Ascending aorta (tissue), 2 donors: ENCODE measurements at regions of chr9 and their contacts with region 1.

Region 1: DNA sequence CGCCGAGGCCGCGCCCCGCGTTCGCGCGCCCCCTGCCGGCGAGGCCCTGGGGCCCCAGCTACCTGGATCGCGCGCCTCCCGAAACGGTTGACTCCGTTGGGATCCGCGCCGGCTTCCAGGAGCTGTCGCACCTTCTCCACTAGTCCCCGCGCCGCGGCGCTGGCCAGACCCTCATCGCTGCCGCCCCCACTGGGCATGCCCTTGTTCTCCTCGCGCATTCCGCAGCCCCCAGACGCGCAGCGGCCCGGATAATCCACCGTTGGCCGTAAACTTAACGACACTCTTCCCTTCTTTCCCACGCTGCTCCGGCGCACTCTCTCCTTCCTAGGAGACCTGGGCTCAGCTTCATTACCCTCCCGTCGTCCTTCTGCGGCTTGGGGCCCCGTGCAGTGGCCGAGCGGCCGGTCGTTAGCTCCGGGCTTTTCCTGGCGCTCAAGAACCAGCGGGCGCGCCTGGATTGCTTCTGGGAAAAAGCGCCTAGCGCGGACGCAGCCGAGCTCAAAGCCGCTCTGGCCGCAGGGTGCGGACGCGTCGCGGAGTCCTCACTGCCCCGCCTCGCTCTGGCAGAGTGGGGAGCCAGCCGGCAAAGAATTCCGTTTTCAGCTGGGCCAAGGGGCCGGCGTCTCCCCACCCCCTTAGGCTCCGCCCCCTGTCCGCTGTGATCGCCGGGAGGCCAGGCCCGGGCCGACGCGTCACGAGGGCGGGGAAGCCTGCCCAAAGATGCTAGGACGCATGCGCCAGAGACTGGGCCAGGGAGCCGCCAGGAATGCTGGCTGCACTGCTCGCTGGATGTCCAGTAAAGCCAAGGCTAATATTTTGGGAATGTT is at the start of gene CDKN2B:
- DNase-seq: peak; percentile 78 to 97
- H3K4me3 ChIP-seq: peak within 1 kb of the TSS; percentile 76 to 78
- H3K27ac ChIP-seq: peak within 1 kb of the TSS; percentile 87 to 93
- H3K4me1 ChIP-seq: peaks cover 0 to 9% of the 10 kb centered on the region in 2 donors
- H3K27me3 ChIP-seq: no peaks in the 10 kb centered on the region
- CTCF ChIP-seq: peak; percentile 73 to 95 (median 93)
- total RNA-seq, gene CDKN2B: 11.4 TPM

Region 2: DNA sequence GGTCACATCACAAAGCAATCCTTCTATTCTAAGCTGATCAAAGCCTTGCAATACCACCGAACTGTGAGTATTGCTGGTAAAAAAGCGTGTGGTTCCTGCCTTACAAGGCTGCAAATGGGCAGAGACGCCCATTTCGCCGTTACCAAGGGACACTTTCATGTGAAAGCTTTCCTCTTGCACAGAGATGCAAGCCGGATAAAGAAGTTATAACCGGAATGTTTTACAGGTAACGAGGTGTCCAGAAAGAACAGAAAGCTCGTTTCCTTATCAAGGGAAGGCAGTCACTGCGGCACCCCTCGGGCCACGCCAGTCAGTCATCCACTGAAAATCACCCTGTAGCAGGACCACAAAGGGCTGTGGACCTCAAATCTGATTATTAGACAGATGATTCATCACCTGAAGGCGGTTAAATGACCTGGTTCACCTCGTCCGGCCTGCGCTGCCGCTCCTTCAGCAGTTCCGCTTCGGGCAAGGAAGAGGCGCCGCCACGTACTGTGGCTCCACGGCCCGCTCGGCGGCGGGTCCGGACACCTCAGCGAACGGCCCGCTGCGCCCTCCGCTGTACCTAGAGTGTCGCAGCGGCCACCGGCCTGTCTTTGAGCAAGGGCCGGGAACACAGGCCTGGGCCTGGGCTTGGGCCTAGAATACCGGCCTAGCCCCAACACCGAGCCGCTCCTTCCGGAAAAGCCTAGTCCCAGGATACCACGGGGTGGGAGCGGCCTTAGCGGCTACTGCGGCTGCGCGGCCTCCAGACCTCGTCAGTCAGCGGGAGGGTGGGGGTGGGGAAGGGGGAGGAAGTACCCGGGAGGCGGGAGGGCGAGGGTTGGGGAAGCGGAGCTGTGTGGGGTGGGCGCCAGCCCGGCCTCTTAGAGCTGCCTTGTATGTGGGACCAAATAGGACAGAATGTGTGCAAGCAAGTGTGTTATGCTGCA is 674.0 kb before region 1 on chr9 and contains the start of gene KLHL9:
- intact Hi-C with region 1: loop called (anchors 10 kb)
- DNase-seq: peak; percentile 54 to 95
- H3K4me3 ChIP-seq: peak within 1 kb of the TSS; percentile 73 to 99
- H3K27ac ChIP-seq: peak within 1 kb of the TSS; percentile 86 to 97
- H3K4me1 ChIP-seq: peaks cover 9 to 27% of the 10 kb centered on the region in 2 donors
- H3K27me3 ChIP-seq: no peaks in the 10 kb centered on the region
- CTCF ChIP-seq: no peak
- total RNA-seq, gene KLHL9: 6.4 TPM

Region 3: GRCh38 chr9:21802195-21803000 is 206.6 kb before region 1 on chr9 and contains the start of gene MTAP:
- intact Hi-C with region 1: loop called (anchors 2 kb)
- DNase-seq: peak; percentile 70 to 94
- H3K4me3 ChIP-seq: peak within 1 kb of the TSS; percentile 91 to 99
- H3K27ac ChIP-seq: peak within 1 kb of the TSS; percentile 87 to 91
- H3K4me1 ChIP-seq: peaks cover 0 to 10% of the 10 kb centered on the region in 2 donors
- H3K27me3 ChIP-seq: no peaks in the 10 kb centered on the region
- CTCF ChIP-seq: no peak
- total RNA-seq, gene MTAP: 34.7 TPM

Region 4: DNA sequence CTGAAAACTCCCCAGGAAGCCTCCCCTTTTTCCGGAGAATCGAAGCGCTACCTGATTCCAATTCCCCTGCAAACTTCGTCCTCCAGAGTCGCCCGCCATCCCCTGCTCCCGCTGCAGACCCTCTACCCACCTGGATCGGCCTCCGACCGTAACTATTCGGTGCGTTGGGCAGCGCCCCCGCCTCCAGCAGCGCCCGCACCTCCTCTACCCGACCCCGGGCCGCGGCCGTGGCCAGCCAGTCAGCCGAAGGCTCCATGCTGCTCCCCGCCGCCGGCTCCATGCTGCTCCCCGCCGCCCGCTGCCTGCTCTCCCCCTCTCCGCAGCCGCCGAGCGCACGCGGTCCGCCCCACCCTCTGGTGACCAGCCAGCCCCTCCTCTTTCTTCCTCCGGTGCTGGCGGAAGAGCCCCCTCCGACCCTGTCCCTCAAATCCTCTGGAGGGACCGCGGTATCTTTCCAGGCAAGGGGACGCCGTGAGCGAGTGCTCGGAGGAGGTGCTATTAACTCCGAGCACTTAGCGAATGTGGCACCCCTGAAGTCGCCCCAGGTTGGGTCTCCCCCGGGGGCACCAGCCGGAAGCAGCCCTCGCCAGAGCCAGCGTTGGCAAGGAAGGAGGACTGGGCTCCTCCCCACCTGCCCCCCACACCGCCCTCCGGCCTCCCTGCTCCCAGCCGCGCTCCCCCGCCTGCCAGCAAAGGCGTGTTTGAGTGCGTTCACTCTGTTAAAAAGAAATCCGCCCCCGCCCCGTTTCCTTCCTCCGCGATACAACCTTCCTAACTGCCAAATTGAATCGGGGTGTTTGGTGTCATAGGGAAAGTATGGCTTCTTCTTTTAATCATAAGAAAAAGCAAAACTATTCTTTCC is 34.2 kb before region 1 on chr9:
- intact Hi-C with region 1: loop called (anchors 1 kb)
- DNase-seq: peak in 1 of 2 donors; percentile 65
- H3K4me3 ChIP-seq: peak overlapping the region; percentile 47 to 58
- H3K27ac ChIP-seq: no peak overlapping the region
- H3K4me1 ChIP-seq: peaks cover 0 to 8% of the 10 kb centered on the region in 2 donors
- H3K27me3 ChIP-seq: peaks cover 38% of the 10 kb centered on the region
- CTCF ChIP-seq: no peak

Region 5: DNA sequence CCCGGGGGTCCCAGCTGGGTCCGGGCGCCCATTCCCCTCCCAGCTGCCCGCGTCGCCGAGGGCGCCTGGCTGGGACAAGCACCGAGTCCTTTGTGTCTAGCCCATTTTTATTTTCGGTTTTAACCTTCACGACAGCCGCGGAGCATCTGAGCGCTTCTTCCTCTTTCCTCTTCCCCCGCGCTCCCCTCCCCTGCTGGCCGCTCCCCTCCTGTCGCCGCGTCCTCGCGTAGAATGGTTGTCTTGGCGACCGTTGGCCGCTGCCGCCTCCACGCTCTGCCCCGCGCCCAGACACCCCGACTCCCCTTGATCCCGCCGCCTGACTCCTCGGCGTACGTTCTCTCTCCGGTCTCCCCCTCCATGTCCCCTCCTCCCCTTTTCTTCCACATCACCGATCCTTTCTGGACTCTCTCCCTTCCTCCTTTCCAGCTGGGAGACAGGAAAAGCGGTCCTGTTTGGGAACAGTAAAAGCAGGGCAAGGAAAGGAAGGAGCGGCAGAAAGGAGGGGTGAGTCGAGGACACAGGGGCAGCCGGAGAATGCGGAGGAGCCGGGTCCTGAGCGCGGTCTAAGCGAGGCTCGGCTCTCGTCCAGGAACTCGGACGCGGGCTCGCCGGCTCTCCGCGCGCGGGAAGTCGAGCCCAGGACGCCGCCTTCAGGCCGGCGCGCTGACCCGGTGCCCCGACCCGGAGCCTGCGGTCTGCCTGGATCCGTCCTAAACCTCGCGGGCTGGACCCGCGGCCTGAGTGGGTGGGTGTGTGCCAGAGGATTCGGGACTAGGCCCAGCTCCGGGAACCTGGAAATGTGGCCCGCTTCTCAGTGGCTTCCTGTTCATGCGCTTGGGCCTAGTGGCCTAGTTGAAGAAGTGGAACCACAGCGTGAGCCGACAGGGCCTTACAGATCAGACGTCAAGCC is 13.5 kb before region 1 on chr9:
- intact Hi-C with region 1: loop called (anchors 1 kb)
- DNase-seq: peak in 1 of 2 donors; percentile 86
- H3K4me3 ChIP-seq: peak overlapping the region; percentile 60 to 96
- H3K27ac ChIP-seq: peak overlapping the region; percentile 19 to 73
- H3K4me1 ChIP-seq: peaks cover 0 to 5% of the 10 kb centered on the region in 2 donors
- H3K27me3 ChIP-seq: no peaks in the 10 kb centered on the region
- CTCF ChIP-seq: peak in 2 of 3 experiments; percentile 28 to 39

Region 6: DNA sequence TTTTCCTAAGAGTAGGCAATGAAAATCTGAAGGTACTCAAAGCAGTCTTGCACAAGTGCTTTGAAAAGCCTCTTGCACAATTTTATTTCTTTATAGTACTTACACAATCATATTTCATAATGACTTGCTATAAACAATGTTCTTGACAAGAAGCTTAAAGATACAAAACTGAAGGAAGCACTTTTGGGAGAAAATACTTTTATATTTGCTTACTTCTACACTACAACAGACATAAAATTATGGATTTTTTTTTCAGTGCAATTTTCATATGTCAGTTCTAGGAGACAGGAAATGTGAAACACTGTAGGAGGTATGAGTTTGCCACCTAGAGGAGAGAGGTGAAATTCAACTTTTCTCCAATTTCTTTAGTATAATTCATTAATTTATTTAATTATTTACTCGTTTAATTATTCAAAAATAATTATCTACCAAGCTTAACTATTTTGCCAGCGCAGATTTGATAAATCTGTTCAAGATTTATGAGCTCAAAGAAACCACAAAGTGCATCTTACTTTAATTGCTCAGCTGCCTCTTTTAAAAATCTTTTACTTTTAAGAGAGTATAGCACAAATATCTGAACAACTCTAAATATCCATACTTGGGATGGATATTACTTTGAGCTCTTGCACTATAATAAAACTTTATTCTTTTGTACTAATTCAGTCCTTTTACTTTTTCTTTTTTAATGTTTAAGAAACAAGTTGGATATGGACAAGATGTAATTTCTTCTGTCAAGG is 29.2 kb after region 1 on chr9:
- intact Hi-C with region 1: loop called (anchors 1 kb)
- DNase-seq: no peak
- H3K4me3 ChIP-seq: no peak overlapping the region
- H3K27ac ChIP-seq: no peak overlapping the region
- H3K4me1 ChIP-seq: no peaks in the 10 kb centered on the region
- H3K27me3 ChIP-seq: no peaks in the 10 kb centered on the region
- CTCF ChIP-seq: peak in 2 of 3 experiments; percentile 37 to 50

Region 7: DNA sequence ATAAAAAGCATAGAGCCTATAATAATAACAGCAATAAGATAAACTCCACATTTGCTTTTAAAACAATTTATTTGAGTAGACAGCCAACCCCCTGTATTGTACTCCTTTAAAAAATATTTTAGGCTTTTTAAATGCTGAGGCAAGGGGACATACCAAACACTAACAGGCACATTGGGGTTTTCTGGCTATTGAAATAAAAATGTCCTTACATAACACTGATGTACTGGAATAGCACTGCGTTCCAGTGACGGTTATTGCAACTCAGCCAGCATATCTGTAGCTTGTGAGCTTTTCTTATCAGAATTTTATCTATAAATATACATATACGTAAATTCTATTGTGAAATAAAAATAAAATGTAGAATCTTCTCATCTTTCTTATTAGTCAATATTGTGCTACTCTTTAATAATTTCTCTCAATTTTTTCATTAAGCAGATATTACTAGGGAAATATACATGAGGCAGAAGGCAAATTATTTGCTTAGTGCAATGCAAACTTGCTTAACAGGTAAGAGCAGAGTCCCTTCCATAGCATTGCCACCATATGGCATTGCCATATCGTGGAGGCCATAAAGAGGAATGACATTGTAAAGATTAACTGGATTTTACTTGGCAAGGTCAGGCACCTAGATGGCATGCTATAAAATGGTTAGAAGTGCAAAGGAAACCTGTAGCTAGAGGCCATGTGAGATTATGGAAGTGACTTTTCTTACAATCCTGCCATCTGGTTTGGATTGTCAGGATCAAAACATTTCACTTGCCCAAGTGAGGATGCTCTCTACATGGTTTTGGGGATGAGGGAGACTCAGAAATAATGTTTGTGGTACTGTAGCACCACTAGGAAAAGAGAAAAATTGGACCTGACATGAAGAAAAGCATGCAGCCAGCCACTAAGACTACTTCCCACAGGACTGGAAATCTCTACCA is 95.0 kb after region 1 on chr9:
- intact Hi-C with region 1: loop called (anchors 2 kb)
- DNase-seq: no peak
- H3K4me3 ChIP-seq: no peak overlapping the region
- H3K27ac ChIP-seq: peak overlapping the region; percentile 49 to 72
- H3K4me1 ChIP-seq: peaks cover 0 to 8% of the 10 kb centered on the region in 2 donors
- H3K27me3 ChIP-seq: no peaks in the 10 kb centered on the region
- CTCF ChIP-seq: no peak